Adrenal gland (tissue), 19 donors: ENCODE measurements at regions of chr18 and their contacts with region 1.

Region 1: DNA sequence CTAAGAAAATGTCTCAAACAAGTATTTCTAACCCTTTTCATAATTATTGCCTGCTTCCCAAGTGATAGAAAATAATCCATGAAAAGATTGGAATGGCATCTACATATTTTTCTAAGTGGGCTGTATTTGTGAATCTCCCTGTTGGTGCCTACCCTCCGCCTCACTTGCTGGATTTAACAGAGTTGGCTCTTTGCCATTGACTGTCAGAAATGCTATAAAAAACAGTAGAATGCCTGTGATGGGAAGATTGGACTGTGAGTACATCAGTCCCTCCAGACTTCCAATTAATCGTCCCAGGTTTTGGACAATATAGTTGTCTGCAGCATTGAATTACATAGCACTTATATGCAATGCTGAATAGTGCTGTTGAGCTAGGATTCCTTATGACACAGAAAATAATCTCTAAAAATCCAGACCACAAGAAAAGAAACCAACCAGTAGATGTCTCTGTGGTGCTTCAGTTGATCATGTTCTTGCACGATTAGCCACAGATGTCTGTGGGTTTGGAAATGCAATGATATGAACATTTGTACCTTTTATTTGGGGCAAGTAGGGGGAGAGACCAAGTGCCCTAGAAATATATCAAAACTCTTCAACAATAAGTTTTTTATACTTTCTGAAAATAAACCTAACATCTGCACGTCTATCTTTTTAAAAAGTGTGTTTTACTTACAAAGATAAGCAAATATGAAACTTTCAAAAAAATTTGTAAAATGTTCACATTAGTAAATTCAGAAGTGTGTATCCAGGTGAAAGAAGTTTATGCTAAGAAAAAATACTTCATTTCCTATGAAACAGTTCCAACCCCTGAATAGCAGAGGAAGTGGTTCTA is 88.5 kb downstream of the DYNAP start:
- DNase-seq: no peak
- H3K4me3 ChIP-seq: no peak overlapping the region
- H3K27ac ChIP-seq: no peak overlapping the region
- H3K4me1 ChIP-seq: no peaks in the 10 kb centered on the region
- H3K27me3 ChIP-seq: no peaks in the 10 kb centered on the region
- CTCF ChIP-seq: peak; percentile 4 to 63 (median 46)
- POLR2A ChIP-seq: no peak

Region 2: GRCh38 chr18:54444319-54444914 is 235.1 kb before region 1 on chr18:
- intact Hi-C with region 1: loop called (anchors 10 kb)
- DNase-seq: peak; percentile 23 to 64 (median 46)
- H3K4me3 ChIP-seq: no peak overlapping the region
- H3K27ac ChIP-seq: no peak overlapping the region
- H3K4me1 ChIP-seq: no peaks in the 10 kb centered on the region
- H3K27me3 ChIP-seq: no peaks in the 10 kb centered on the region
- CTCF ChIP-seq: peak; percentile 18 to 63 (median 54)
- POLR2A ChIP-seq: no peak

Region 3: DNA sequence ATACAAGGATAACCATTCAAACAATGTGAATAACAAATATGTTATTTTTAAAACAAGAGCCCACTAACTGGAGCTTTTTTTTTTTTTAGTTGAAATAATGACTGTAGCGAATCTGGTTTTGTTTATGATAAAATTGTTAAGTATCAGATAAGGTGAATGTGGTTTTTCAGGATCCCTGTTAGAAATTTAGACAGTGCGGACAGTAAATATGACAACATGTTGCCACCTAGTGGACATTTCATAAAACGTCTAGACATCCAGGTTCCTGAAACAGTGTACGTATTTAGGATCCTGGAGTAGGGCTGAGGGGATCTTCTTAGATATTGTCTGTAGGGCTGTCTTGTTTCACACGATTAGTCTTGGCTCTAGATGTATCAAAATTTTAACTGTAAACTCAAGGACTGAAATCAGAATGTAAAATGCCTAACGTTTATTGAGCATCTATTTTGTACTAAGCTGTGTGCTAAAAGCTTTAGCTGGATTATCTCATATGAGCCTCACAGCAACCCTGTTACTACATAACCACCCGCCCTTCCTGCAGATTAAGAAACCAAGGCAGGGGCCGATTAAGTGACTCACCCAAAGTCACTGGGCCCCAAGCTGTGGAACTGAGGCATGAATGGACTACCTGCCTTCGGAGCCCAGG is 303.6 kb after region 1 on chr18:
- intact Hi-C with region 1: loop called in 1 of 2 experiments (anchors 5 kb)
- DNase-seq: no peak
- H3K4me3 ChIP-seq: no peak overlapping the region
- H3K27ac ChIP-seq: no peak overlapping the region
- H3K4me1 ChIP-seq: no peaks in the 10 kb centered on the region
- H3K27me3 ChIP-seq: no peaks in the 10 kb centered on the region
- CTCF ChIP-seq: peak; percentile 51 to 76 (median 67)
- POLR2A ChIP-seq: no peak